CD4-positive, alpha-beta T cell (primary cell): ENCODE measurements at regions of chr17 and their contacts with region 1.

Region 1: DNA sequence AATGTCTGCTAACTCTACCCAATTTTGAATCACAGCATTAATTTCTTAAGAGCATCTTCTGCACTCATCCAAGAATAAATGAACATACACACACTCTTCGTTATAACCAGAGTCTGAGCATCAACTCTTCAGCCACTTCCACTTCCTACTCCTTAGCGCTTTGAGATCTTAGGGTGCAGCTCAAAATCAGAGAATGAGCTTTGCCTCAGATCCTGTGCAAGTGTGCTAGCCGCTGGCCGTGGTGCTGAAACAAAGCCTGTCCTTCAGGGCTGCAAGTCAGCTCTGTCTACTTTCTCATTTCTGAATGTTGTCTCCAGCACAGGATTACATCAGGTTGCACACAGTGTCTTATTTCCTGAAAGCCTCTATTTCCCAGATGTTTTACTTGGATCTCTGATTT is 165.4 kb downstream of the AIPL1 start:
- DNase-seq: peak in 5 of 14 experiments; percentile 2 to 21 (median 5)
- ATAC-seq: no peak
- H3K4me3 ChIP-seq: no peak overlapping the region
- H3K4me3 Mint-ChIP-seq: no peak overlapping the region
- H3K27ac ChIP-seq: no peak overlapping the region
- H3K27ac Mint-ChIP-seq: no peak overlapping the region
- H3K4me1 ChIP-seq: no peaks in the 10 kb centered on the region
- H3K4me1 Mint-ChIP-seq: no peaks in the 10 kb centered on the region
- H3K27me3 ChIP-seq: peaks cover 0 to 4% of the 10 kb centered on the region in 2 experiments
- H3K27me3 Mint-ChIP-seq: peaks cover 13% of the 10 kb centered on the region
- CTCF ChIP-seq: no peak

Region 2: DNA sequence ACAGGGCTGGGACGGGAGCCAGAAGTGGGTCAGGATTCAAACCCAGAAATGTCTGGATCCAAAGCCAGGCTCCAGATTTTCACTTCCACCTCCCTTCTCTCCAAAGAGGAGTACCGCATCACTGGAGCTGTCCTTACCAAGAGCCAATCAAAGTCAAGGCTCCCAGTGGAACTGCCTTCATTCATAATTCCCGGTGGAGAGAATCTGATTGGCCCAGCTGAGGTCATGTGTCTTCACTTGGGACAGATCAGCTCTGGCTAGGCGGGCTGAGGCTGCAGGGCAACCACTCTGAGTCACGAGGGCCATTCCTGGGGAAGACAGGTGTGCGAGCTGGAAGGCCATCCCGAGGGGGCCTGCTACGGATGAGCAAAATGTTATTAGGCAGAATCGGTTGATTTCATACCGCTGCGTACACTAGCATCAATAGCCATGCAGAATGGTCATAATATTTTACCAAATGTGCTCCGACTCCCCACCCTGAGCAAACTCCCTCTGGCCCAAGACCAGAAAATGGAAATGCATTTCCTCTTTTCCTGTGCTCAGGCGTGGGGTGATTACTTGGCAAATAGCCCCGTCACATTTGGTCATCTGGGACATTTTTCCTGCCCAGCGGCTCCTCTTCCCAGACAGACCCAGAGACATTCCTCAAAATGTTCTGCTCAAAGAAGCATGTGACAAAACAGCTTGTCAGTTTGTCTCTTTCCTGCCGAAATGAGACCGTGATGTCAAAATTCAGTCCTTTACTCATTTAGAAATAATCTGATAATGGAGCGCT is 54.3 kb after region 1 on chr17:
- CTCF ChIA-PET with region 1: no interaction called
- POLR2A ChIA-PET with region 1: no interaction called
- intact Hi-C with region 1: loop called in 1 of 2 experiments (anchors 5 kb)
- DNase-seq: no peak
- ATAC-seq: no peak
- H3K4me3 ChIP-seq: no peak overlapping the region
- H3K4me3 Mint-ChIP-seq: no peak overlapping the region
- H3K27ac ChIP-seq: no peak overlapping the region
- H3K27ac Mint-ChIP-seq: no peak overlapping the region
- H3K4me1 ChIP-seq: no peaks in the 10 kb centered on the region
- H3K4me1 Mint-ChIP-seq: no peaks in the 10 kb centered on the region
- H3K27me3 ChIP-seq: peaks cover 11 to 18% of the 10 kb centered on the region in 2 experiments
- H3K27me3 Mint-ChIP-seq: peaks cover 56% of the 10 kb centered on the region
- CTCF ChIP-seq: no peak

Region 3: DNA sequence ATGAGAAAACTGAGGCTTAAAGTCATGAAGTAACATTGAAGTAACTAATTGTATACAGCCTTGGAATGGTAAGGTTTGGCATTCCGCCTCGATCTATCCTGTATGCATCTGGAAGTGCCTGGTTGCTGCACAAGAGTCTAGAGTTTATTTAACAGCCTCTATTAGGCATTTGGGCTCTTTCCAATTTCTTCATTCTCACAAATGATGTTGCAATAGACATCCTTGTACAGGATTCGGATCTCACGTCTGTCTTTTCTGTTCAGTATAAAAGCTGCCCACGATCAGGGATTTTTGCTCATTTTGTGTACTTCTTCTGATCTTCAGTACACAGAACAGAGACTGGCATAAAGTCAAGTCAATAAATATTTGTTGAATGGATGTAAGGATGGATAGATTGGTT is 64.9 kb after region 1 on chr17:
- CTCF ChIA-PET with region 1: no interaction called
- POLR2A ChIA-PET with region 1: no interaction called
- intact Hi-C with region 1: no loop called
- DNase-seq: no peak
- ATAC-seq: no peak
- H3K4me3 ChIP-seq: no peak overlapping the region
- H3K4me3 Mint-ChIP-seq: no peak overlapping the region
- H3K27ac ChIP-seq: no peak overlapping the region
- H3K27ac Mint-ChIP-seq: no peak overlapping the region
- H3K4me1 ChIP-seq: no peaks in the 10 kb centered on the region
- H3K4me1 Mint-ChIP-seq: no peaks in the 10 kb centered on the region
- H3K27me3 ChIP-seq: peaks cover 0 to 2% of the 10 kb centered on the region in 2 experiments
- H3K27me3 Mint-ChIP-seq: peaks cover 26% of the 10 kb centered on the region
- CTCF ChIP-seq: no peak